IMR-90 (cell line): ENCODE measurements at regions of chr5 and their contacts with region 1.

Region 1: DNA sequence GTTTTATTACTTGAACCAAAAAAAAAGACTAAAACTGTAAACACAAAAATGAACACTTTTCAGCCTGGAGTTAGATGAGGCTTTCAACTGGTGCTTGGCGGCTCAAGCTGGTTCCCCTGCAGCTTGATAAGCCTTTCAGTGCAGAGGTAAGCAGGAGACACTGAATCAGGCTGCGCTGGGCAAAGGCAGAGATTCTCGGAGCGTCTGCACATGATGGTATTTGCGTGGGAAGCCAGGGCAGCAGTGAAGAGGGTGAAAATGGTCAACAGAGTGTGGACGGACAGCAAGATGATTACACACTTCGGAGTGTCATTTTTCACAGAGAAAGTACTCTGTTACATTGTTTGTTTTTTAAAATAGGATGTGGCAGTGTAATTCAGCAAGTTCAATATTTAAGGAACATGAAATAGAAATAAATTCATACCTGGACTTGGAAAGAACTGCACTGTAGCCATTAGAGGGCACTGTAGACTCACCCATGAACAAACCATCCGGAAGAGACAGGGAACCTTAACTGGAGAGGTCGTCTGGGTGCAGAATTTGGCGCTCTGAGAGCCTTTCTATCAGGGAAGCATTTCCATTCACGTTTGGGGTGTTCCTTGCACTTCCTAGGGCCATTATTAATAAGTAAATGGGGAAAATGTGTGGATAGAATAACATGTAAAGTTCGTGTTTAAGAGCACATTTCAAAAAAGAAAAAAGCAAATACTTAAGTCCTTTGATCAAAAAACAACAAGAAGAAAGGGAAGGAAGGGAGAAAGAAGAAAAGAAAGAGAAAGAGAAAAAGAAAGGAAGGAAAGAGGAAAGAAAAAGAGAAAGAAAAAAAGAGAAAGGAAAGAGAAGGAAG is 69.8 kb downstream of the ICE1 start:
- DNase-seq: peak; percentile 61
- ATAC-seq: peak; percentile 63
- H3K4me3 ChIP-seq: no peak overlapping the region
- H3K27ac ChIP-seq: no peak overlapping the region
- H3K4me1 ChIP-seq: no peaks in the 10 kb centered on the region
- H3K27me3 ChIP-seq: peaks cover 3% of the 10 kb centered on the region; the same call in 1 of the 2 replicates
- CTCF ChIP-seq: peak; percentile 73
- POLR2A ChIP-seq: no peak
- RAD21 ChIP-seq: peak; percentile 74

Region 2: DNA sequence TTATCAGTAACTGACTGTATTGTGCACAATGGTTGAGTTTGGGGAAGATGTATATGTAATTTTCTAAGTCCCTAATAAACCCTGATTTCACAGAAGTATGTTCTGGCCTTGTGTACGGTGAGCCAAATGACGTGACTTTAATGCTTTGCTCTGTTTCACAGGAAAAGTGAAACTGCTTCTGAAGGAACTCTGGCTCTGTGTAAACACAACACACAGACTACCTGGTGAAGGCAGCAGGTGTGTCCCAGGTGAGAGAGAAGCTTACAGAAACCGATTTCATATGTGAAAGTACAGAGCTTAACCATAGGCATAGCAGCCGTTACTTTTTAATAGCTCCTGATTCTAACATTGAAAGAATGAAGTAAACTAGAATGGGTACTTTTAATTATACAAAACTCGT is 37.9 kb before region 1 on chr5:
- CTCF ChIA-PET with region 1: no interaction called
- POLR2A ChIA-PET with region 1: no interaction called
- dilution Hi-C with region 1: no loop called
- in situ Hi-C with region 1: no loop called
- intact Hi-C with region 1: no loop called
- DNase-seq: no peak
- ATAC-seq: no peak
- H3K4me3 ChIP-seq: no peak overlapping the region
- H3K27ac ChIP-seq: no peak overlapping the region
- H3K4me1 ChIP-seq: no peaks in the 10 kb centered on the region
- H3K27me3 ChIP-seq: no peaks in the 10 kb centered on the region
- CTCF ChIP-seq: no peak
- POLR2A ChIP-seq: no peak
- RAD21 ChIP-seq: no peak

Region 3: GRCh38 chr5:5755888-5756287 is 263.6 kb after region 1 on chr5:
- CTCF ChIA-PET with region 1: no interaction called
- POLR2A ChIA-PET with region 1: no interaction called
- dilution Hi-C with region 1: no loop called
- in situ Hi-C with region 1: no loop called
- intact Hi-C with region 1: no loop called
- DNase-seq: no peak
- ATAC-seq: no peak
- H3K4me3 ChIP-seq: no peak overlapping the region
- H3K27ac ChIP-seq: no peak overlapping the region
- H3K4me1 ChIP-seq: no peaks in the 10 kb centered on the region
- H3K27me3 ChIP-seq: no peaks in the 10 kb centered on the region
- CTCF ChIP-seq: no peak
- POLR2A ChIP-seq: no peak
- RAD21 ChIP-seq: no peak

Region 4: DNA sequence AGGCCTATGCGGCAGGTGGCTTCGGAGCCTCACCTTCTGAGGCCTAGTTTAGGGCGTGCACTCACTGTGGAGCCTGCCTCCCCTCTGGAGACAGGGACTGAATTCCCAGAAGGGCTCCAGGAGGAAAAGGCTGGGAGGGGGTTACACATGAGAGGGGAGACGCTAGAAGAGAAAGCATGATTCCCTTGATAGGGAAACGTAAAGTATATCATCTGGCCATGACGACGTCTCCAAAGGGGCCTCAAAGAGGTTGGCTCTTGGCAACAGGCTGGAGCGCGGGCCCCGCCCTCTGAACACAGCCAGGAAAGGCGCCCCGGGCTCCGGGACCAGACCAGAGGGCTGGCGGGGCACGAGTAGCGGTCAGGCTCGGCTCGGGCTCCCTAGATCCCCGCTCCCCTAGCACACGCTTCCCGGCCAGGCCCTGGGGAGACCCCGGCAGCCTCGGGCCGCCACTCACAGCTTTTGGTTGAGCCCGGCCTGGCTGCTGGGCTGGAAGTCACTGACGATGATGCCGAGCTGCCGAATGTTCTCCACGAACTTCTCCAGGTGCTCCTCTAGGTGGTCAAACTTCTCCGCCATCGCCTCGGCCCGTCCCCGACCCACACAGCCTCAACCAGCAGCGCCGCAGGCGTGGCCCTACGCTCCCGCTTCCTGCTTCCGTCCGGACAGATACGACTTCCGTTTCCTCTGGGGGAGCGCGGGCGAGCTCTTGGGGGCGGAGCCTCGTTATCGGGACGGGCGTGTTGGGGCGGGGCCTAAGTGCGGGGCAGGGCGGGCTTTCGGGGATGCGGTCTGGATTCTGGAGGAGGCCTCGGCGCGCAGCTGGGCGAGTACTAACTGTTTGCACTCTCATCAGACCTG is 885.8 kb after region 1 on chr5 and contains the start of gene MED10:
- CTCF ChIA-PET with region 1: no interaction called
- POLR2A ChIA-PET with region 1: interaction called, 4 read pairs
- dilution Hi-C with region 1: no loop called
- in situ Hi-C with region 1: loop called (anchors 10 kb)
- intact Hi-C with region 1: loop called (anchors 1 kb)
- DNase-seq: peak; percentile 91
- ATAC-seq: peak; percentile 98
- H3K4me3 ChIP-seq: peak within 1 kb of the TSS; percentile 84
- H3K27ac ChIP-seq: peak within 1 kb of the TSS; percentile 80
- H3K4me1 ChIP-seq: peaks cover 4% of the 10 kb centered on the region
- H3K27me3 ChIP-seq: no peaks in the 10 kb centered on the region
- CTCF ChIP-seq: no peak
- POLR2A ChIP-seq: peak; percentile 85
- RAD21 ChIP-seq: no peak
- total RNA-seq, gene MED10: 9.1 and 15.6 TPM in 2 replicates

Region 5: DNA sequence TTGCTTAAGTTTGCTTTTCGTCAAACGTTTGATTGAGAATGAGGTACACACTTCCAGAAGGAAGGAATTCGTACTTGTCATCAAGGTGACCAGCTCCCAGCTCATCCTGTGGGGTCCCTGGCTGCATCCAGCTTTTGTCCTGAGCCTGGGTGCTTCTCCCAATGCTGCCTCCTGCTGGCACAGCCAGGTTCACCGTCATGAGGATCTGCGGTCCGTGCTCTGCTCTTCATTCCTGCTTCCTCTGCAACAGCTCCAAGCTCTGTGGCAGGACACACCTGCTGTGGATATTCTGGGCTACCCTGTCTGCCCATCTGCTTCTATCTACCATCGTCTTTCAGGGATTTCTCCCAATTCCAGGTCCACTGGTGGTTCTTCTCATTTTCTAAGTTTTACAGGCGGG is 943.0 kb after region 1 on chr5:
- CTCF ChIA-PET with region 1: no interaction called
- POLR2A ChIA-PET with region 1: no interaction called
- dilution Hi-C with region 1: no loop called
- in situ Hi-C with region 1: no loop called
- intact Hi-C with region 1: loop called (anchors 10 kb)
- DNase-seq: no peak
- ATAC-seq: no peak
- H3K4me3 ChIP-seq: no peak overlapping the region
- H3K27ac ChIP-seq: no peak overlapping the region
- H3K4me1 ChIP-seq: no peaks in the 10 kb centered on the region
- H3K27me3 ChIP-seq: no peaks in the 10 kb centered on the region
- CTCF ChIP-seq: peak; percentile 16; the same call in 1 of the 2 replicates
- POLR2A ChIP-seq: no peak
- RAD21 ChIP-seq: peak; percentile 13; the same call in 1 of the 2 replicates

Region 6: DNA sequence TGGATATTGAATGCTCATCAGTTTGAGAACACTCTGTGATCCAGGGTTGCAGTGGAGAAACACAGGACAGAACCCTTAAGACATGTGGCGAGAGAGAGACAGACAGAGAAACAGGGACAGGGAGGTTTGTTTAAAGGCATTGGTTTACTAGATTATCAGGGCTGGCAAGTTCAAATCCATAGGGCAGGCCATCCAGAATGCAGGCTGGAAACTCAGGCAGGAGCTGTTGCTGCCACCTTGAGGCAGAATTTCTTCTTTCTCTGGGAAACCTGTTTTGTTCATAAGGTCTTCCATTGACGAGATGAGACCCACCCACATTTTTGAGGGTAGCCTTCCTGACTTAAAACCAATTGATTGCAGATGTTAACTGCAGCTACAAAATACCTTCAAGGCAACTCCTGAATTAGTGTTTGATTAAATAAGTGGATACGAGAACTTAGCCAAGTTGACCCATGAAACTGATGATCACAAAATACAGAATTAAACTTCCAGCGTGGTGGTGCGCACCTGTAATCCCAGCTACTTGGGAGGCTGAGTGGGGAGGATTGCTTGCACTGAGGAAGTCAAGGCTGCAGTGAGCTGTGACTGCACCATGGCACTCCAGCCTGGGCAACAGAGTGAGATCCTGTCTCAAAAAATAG is 1084.7 kb after region 1 on chr5:
- CTCF ChIA-PET with region 1: interaction called, 3 read pairs
- POLR2A ChIA-PET with region 1: no interaction called
- dilution Hi-C with region 1: no loop called
- in situ Hi-C with region 1: loop called (anchors 5 kb)
- intact Hi-C with region 1: loop called (anchors 1 kb)
- DNase-seq: peak; percentile 52
- ATAC-seq: peak; percentile 88
- H3K4me3 ChIP-seq: no peak overlapping the region
- H3K27ac ChIP-seq: no peak overlapping the region
- H3K4me1 ChIP-seq: no peaks in the 10 kb centered on the region
- H3K27me3 ChIP-seq: peaks cover 16% of the 10 kb centered on the region
- CTCF ChIP-seq: peak; percentile 60
- POLR2A ChIP-seq: no peak
- RAD21 ChIP-seq: peak; percentile 70

Region 7: GRCh38 chr5:6745706-6746222 is 1253.5 kb after region 1 on chr5:
- CTCF ChIA-PET with region 1: no interaction called
- POLR2A ChIA-PET with region 1: no interaction called
- dilution Hi-C with region 1: no loop called
- in situ Hi-C with region 1: loop called (anchors 25 kb)
- intact Hi-C with region 1: loop called (anchors 5 kb)
- DNase-seq: peak; percentile 79
- ATAC-seq: peak; percentile 93
- H3K4me3 ChIP-seq: no peak overlapping the region
- H3K27ac ChIP-seq: no peak overlapping the region
- H3K4me1 ChIP-seq: peaks cover 2% of the 10 kb centered on the region
- H3K27me3 ChIP-seq: no peaks in the 10 kb centered on the region
- CTCF ChIP-seq: peak; percentile 88
- POLR2A ChIP-seq: no peak
- RAD21 ChIP-seq: peak; percentile 93

Region 8: GRCh38 chr5:6837519-6838110 is 1345.3 kb after region 1 on chr5:
- CTCF ChIA-PET with region 1: no interaction called
- POLR2A ChIA-PET with region 1: no interaction called
- dilution Hi-C with region 1: no loop called
- in situ Hi-C with region 1: no loop called
- intact Hi-C with region 1: loop called (anchors 5 kb)
- DNase-seq: no peak
- ATAC-seq: no peak; the same call in 1 of the 2 replicates
- H3K4me3 ChIP-seq: no peak overlapping the region
- H3K27ac ChIP-seq: no peak overlapping the region
- H3K4me1 ChIP-seq: no peaks in the 10 kb centered on the region
- H3K27me3 ChIP-seq: no peaks in the 10 kb centered on the region
- CTCF ChIP-seq: peak; percentile 59
- POLR2A ChIP-seq: no peak
- RAD21 ChIP-seq: peak; percentile 55